ENCODE measurements at regions of chr3 and their contacts with region 1.

Region 1: DNA sequence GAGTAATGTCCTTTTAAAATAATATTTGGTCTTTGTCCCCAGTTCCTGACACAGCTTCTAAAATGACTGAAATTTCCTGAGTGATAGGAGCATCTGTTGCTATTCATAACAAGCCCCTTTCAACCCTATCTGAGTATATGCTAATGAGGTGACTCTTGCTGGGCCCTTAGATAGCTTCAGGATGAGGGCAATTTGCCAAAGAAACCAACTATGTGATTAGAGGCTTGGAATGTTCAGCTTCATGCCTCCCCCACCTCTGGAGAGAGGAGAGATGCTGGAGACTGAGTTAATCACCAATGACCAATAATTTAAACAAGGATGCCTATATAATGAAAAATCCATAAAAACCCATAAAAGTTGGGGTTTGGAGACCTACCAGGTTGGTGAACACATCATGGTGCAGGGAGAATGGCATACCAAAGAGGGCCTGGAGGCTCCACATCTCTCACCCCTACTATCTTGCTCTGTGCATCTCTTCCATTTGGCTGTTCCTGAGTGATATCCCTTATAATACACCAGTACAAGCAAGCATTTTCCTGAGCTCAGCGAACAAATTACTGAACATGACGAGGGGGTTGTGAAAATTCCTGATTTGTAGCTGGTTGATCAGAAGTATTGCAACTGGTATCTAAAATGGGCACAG is 189.2 kb downstream of the ECT2 start:
- DNase-seq: no peak
- H3K4me3 ChIP-seq: no peak overlapping the region
- H3K27ac ChIP-seq: no peak overlapping the region
- H3K4me1 ChIP-seq: no peaks in the 10 kb centered on the region
- H3K27me3 ChIP-seq: no peaks in the 10 kb centered on the region
- CTCF ChIP-seq: no peak
- EP300 ChIP-seq: no peak
- POLR2A ChIP-seq: no peak

Region 2: GRCh38 chr3:172915911-172916514 is 23.8 kb before region 1 on chr3:
- in situ Hi-C with region 1: no loop called
- intact Hi-C with region 1: loop called (anchors 1 kb)
- DNase-seq: no peak
- H3K4me3 ChIP-seq: no peak overlapping the region
- H3K27ac ChIP-seq: no peak overlapping the region
- H3K4me1 ChIP-seq: no peaks in the 10 kb centered on the region
- H3K27me3 ChIP-seq: no peaks in the 10 kb centered on the region
- CTCF ChIP-seq: no peak
- EP300 ChIP-seq: no peak
- POLR2A ChIP-seq: no peak